Activated CD8-positive, alpha-beta memory T cell treated with anti-CD3 and anti-CD28 coated beads, Interleukin-2, amount 10 ng/mL, durations not matched to agents 7 days and 5 days (primary cell): ENCODE measurements at regions of chr5 and their contacts with region 1.

Region 1: GRCh38 chr5:35926389-35927051 is 11.9 kb downstream of the CAPSL start:
- DNase-seq: peak; percentile 76
- ATAC-seq: peak; percentile 59
- H3K4me3 Mint-ChIP-seq: peak overlapping the region; percentile 55
- H3K27ac Mint-ChIP-seq: no peak overlapping the region
- H3K4me1 Mint-ChIP-seq: peaks cover 34% of the 10 kb centered on the region
- H3K27me3 Mint-ChIP-seq: peaks cover 8% of the 10 kb centered on the region

Region 2: DNA sequence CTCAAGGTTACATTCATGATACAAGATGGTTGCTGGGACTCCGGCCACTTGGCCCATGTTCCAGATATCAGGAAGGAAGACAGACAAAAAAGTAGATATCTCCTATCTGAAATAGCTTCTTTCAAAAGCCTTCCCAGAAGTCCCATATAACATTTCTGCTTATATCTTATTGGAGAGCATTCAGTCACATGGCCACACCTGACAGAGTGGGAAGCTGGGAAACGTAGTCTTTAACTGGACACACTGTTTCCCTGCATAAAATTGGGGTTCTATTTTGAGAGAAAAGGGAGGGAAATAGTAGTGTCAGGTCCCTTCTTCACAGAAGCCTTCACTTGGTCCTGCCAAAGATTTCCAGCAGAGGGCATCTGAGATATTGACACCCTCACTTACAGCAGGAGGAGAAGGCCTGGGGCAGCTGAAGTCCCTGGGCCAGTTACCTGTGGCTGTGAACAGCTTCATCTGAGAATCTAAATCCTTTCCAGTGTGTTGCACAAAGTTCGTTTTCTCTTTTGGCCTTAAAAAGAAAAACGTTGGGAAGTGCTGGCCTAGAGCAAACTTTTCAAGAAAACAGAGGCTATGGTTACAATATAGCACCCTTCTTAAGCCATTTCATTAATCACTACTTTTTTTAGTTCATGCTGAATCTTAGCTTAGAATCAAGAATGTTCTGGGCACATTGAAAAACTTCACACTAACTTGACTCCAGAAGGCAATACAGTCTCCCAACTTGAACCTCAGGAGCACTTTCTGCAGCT is 275.3 kb before region 1 on chr5:
- CTCF ChIA-PET with region 1: interaction called, 140 read pairs
- DNase-seq: peak; percentile 79
- ATAC-seq: peak; percentile 98
- H3K4me3 Mint-ChIP-seq: no peak overlapping the region
- H3K27ac Mint-ChIP-seq: no peak overlapping the region
- H3K4me1 Mint-ChIP-seq: peaks cover 16% of the 10 kb centered on the region
- H3K27me3 Mint-ChIP-seq: no peaks in the 10 kb centered on the region

Region 3: GRCh38 chr5:35672995-35673394 is 253.5 kb before region 1 on chr5:
- CTCF ChIA-PET with region 1: interaction called, 24 read pairs
- DNase-seq: peak; percentile 78
- ATAC-seq: peak; percentile 90
- H3K4me3 Mint-ChIP-seq: peak overlapping the region; percentile 30
- H3K27ac Mint-ChIP-seq: peak overlapping the region; percentile 92
- H3K4me1 Mint-ChIP-seq: peaks cover 57% of the 10 kb centered on the region
- H3K27me3 Mint-ChIP-seq: no peaks in the 10 kb centered on the region

Region 4: DNA sequence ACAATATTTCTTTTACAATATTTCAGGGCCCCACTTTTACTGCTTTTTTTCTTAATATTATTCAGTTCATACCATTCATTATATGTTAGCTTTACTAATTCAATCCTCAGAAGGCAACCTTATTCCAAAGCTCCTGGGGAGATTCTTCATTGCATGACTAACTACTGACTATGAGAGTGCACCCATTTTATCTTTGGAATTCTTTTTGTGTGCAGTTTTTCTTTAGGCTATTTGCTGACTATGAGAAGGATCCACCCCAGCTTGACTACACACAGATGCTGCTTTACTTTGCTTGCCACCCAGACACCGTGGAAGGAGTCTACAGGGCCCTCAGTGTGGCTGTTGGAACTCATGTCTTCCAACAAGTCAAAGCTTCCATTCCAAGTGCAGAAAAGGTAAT is 126.8 kb before region 1 on chr5:
- CTCF ChIA-PET with region 1: interaction called, 10 read pairs
- DNase-seq: no peak
- ATAC-seq: no peak
- H3K4me3 Mint-ChIP-seq: no peak overlapping the region
- H3K27ac Mint-ChIP-seq: no peak overlapping the region
- H3K4me1 Mint-ChIP-seq: peaks cover 54% of the 10 kb centered on the region
- H3K27me3 Mint-ChIP-seq: no peaks in the 10 kb centered on the region

Region 5: DNA sequence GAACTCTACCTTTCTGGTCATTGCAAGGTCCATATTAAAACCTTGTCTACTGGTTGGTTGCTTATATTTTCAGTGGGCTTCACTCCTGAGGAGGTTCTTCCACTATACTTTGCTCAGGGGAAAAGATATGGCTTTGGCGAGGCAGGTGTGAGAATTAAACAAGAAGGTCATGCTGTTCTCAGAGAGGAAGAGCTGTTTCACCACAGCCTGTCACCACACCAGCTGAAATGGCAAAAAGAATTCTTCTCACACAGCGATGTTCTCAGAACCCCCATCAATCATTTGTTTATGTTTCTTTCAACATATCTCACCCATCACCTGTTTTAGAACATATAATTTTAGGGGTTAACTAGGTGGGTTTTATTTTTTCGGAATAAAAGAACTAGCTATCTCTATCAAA is 26.7 kb before region 1 on chr5:
- CTCF ChIA-PET with region 1: interaction called, 14 read pairs
- DNase-seq: peak; percentile 60
- ATAC-seq: no peak
- H3K4me3 Mint-ChIP-seq: no peak overlapping the region
- H3K27ac Mint-ChIP-seq: peak overlapping the region; percentile 74
- H3K4me1 Mint-ChIP-seq: peaks cover 65% of the 10 kb centered on the region
- H3K27me3 Mint-ChIP-seq: no peaks in the 10 kb centered on the region

Region 6: GRCh38 chr5:36214434-36214833 is 287.9 kb after region 1 on chr5:
- CTCF ChIA-PET with region 1: no interaction called
- DNase-seq: no peak
- ATAC-seq: no peak
- H3K4me3 Mint-ChIP-seq: no peak overlapping the region
- H3K27ac Mint-ChIP-seq: no peak overlapping the region
- H3K4me1 Mint-ChIP-seq: no peaks in the 10 kb centered on the region
- H3K27me3 Mint-ChIP-seq: no peaks in the 10 kb centered on the region